GM12878 (cell line): ENCODE measurements at regions of chr2 and their contacts with region 1.

Region 1: GRCh38 chr2:165563468-165564225 is 94.1 kb downstream of the CSRNP3 start:
- DNase-seq: no peak
- ATAC-seq: peak; percentile 81
- H3K4me3 ChIP-seq: no peak overlapping the region
- H3K27ac ChIP-seq: no peak overlapping the region
- H3K4me1 ChIP-seq: no peaks in the 10 kb centered on the region
- H3K27me3 ChIP-seq: no peaks in the 10 kb centered on the region
- CTCF ChIP-seq: peak; percentile 11 to 47 (median 43); a peak in 3 of 6 replicates
- EP300 ChIP-seq: no peak
- POLR2A ChIP-seq: no peak
- RAD21 ChIP-seq: no peak

Region 2: DNA sequence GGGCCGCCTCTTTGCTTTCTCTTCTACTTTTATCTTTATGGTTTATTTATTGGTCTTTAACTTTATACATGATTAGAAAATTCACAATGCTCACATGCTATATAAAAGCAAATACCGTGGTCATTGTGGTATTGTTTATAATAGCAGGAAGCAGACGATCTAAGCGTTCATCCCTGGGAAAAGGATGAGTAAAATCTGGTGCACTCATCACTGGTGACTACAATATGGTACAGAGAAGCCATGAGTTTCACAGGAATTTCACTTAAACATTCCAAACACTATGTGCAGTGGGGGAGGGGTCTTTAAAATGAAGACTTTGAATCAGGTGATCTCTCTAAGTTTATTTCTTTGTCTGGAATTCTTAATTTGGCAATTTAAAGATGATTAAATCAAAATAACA is 457.7 kb before region 1 on chr2:
- CTCF ChIA-PET with region 1: no interaction called
- POLR2A ChIA-PET with region 1: no interaction called
- RAD21 ChIA-PET with region 1: no interaction called
- SMC1A ChIA-PET with region 1: no interaction called
- in situ Hi-C with region 1: no loop called
- intact Hi-C with region 1: no loop called
- DNase-seq: no peak
- ATAC-seq: no peak
- H3K4me3 ChIP-seq: no peak overlapping the region
- H3K27ac ChIP-seq: no peak overlapping the region
- H3K4me1 ChIP-seq: no peaks in the 10 kb centered on the region
- H3K27me3 ChIP-seq: no peaks in the 10 kb centered on the region
- CTCF ChIP-seq: no peak
- EP300 ChIP-seq: no peak
- POLR2A ChIP-seq: no peak
- RAD21 ChIP-seq: no peak

Region 3: GRCh38 chr2:165256618-165257017 is 307.0 kb before region 1 on chr2:
- CTCF ChIA-PET with region 1: no interaction called
- POLR2A ChIA-PET with region 1: no interaction called
- RAD21 ChIA-PET with region 1: no interaction called
- SMC1A ChIA-PET with region 1: no interaction called
- in situ Hi-C with region 1: no loop called
- intact Hi-C with region 1: no loop called
- DNase-seq: no peak
- ATAC-seq: no peak
- H3K4me3 ChIP-seq: no peak overlapping the region
- H3K27ac ChIP-seq: no peak overlapping the region
- H3K4me1 ChIP-seq: no peaks in the 10 kb centered on the region
- H3K27me3 ChIP-seq: no peaks in the 10 kb centered on the region
- CTCF ChIP-seq: no peak
- EP300 ChIP-seq: no peak
- POLR2A ChIP-seq: no peak
- RAD21 ChIP-seq: no peak

Region 4: GRCh38 chr2:165391791-165392190 is 171.9 kb before region 1 on chr2:
- CTCF ChIA-PET with region 1: no interaction called
- POLR2A ChIA-PET with region 1: no interaction called
- RAD21 ChIA-PET with region 1: no interaction called
- SMC1A ChIA-PET with region 1: no interaction called
- in situ Hi-C with region 1: no loop called
- intact Hi-C with region 1: no loop called
- DNase-seq: no peak
- ATAC-seq: no peak
- H3K4me3 ChIP-seq: no peak overlapping the region
- H3K27ac ChIP-seq: no peak overlapping the region
- H3K4me1 ChIP-seq: no peaks in the 10 kb centered on the region
- H3K27me3 ChIP-seq: no peaks in the 10 kb centered on the region
- CTCF ChIP-seq: no peak
- EP300 ChIP-seq: no peak
- POLR2A ChIP-seq: no peak
- RAD21 ChIP-seq: no peak

Region 5: GRCh38 chr2:165440367-165440766 is 123.3 kb before region 1 on chr2:
- CTCF ChIA-PET with region 1: interaction called, 10 read pairs
- POLR2A ChIA-PET with region 1: no interaction called
- RAD21 ChIA-PET with region 1: interaction called, 4 read pairs
- SMC1A ChIA-PET with region 1: interaction called, 6 read pairs
- in situ Hi-C with region 1: no loop called
- intact Hi-C with region 1: no loop called
- DNase-seq: no peak
- ATAC-seq: no peak
- H3K4me3 ChIP-seq: no peak overlapping the region
- H3K27ac ChIP-seq: no peak overlapping the region
- H3K4me1 ChIP-seq: no peaks in the 10 kb centered on the region
- H3K27me3 ChIP-seq: no peaks in the 10 kb centered on the region
- CTCF ChIP-seq: no peak
- EP300 ChIP-seq: no peak
- POLR2A ChIP-seq: no peak
- RAD21 ChIP-seq: no peak

Region 6: DNA sequence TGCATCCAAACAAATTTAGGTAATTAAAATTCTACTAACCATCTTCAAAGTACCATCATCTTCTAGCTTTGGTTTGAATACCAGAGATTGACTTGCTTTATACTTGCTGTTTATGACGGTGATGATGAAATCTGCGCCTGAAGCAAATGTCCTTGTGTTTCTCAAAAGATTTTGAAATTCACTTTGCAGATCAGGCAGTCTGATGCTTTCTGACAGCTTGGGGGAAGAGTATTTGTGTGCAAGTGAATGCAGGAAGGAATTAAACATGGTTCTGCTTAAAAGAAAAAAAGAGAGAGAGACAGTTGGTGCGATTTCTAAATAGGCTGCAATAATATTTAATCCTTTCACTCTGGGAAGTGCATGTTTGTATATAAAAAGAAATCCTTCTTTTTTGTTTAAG is 64.5 kb before region 1 on chr2:
- CTCF ChIA-PET with region 1: interaction called, 9 read pairs
- POLR2A ChIA-PET with region 1: no interaction called
- RAD21 ChIA-PET with region 1: interaction called, 8 read pairs
- SMC1A ChIA-PET with region 1: interaction called, 19 read pairs
- in situ Hi-C with region 1: no loop called
- intact Hi-C with region 1: no loop called
- DNase-seq: no peak
- ATAC-seq: no peak
- H3K4me3 ChIP-seq: no peak overlapping the region
- H3K27ac ChIP-seq: no peak overlapping the region
- H3K4me1 ChIP-seq: no peaks in the 10 kb centered on the region
- H3K27me3 ChIP-seq: no peaks in the 10 kb centered on the region
- CTCF ChIP-seq: no peak
- EP300 ChIP-seq: no peak
- POLR2A ChIP-seq: no peak
- RAD21 ChIP-seq: no peak

Region 7: GRCh38 chr2:165587335-165587938 is 23.8 kb after region 1 on chr2:
- CTCF ChIA-PET with region 1: interaction called, 14 read pairs
- POLR2A ChIA-PET with region 1: no interaction called
- RAD21 ChIA-PET with region 1: no interaction called
- SMC1A ChIA-PET with region 1: interaction called, 12 read pairs
- in situ Hi-C with region 1: no loop called
- intact Hi-C with region 1: no loop called
- DNase-seq: peak; percentile 32
- ATAC-seq: peak; percentile 90
- H3K4me3 ChIP-seq: 0 out of 2 replicates have a peak overlapping the region, but pooled peaks have one; percentile 19
- H3K27ac ChIP-seq: no peak overlapping the region; the same call in 1 of the 2 replicates
- H3K4me1 ChIP-seq: peaks cover 5% of the 10 kb centered on the region; the same call in 1 of the 2 replicates
- H3K27me3 ChIP-seq: no peaks in the 10 kb centered on the region
- CTCF ChIP-seq: no peak
- EP300 ChIP-seq: no peak
- POLR2A ChIP-seq: no peak
- RAD21 ChIP-seq: no peak

Region 8: DNA sequence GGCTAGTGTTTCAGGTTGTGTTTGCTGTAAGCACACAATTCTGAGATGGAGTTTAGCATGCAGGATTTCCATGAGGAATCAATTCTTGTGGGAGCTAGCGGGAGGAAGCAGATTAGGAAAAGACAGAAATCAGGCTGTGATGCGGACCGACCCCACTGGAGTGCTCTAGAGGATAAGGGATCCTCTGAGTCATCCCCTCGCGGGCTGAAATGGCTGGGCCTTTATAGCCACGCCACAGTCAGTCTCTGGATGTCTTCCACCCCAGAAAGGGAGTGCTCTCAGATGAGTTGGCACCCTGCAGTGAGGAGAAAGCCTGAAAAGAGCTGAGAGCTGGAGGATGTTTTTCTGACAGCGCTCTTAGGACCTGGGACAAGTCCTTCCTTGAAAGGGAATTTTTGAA is 128.0 kb after region 1 on chr2:
- CTCF ChIA-PET with region 1: interaction called, 105 read pairs
- POLR2A ChIA-PET with region 1: interaction called, 3 read pairs
- RAD21 ChIA-PET with region 1: interaction called, 42 read pairs
- SMC1A ChIA-PET with region 1: interaction called, 100 read pairs
- in situ Hi-C with region 1: no loop called
- intact Hi-C with region 1: no loop called
- DNase-seq: no peak
- ATAC-seq: no peak
- H3K4me3 ChIP-seq: no peak overlapping the region
- H3K27ac ChIP-seq: no peak overlapping the region
- H3K4me1 ChIP-seq: no peaks in the 10 kb centered on the region
- H3K27me3 ChIP-seq: no peaks in the 10 kb centered on the region
- CTCF ChIP-seq: no peak
- EP300 ChIP-seq: no peak
- POLR2A ChIP-seq: no peak
- RAD21 ChIP-seq: no peak

Region 9: GRCh38 chr2:165874445-165875039 is 310.9 kb after region 1 on chr2:
- CTCF ChIA-PET with region 1: interaction called, 33 read pairs
- POLR2A ChIA-PET with region 1: no interaction called
- RAD21 ChIA-PET with region 1: interaction called, 22 read pairs
- SMC1A ChIA-PET with region 1: interaction called, 15 read pairs
- in situ Hi-C with region 1: no loop called
- intact Hi-C with region 1: loop called (anchors 10 kb)
- DNase-seq: peak; percentile 36
- ATAC-seq: peak; percentile 86
- H3K4me3 ChIP-seq: no peak overlapping the region
- H3K27ac ChIP-seq: peak overlapping the region; percentile 12; the same call in 1 of the 2 replicates
- H3K4me1 ChIP-seq: peaks cover 7% of the 10 kb centered on the region; the same call in 1 of the 2 replicates
- H3K27me3 ChIP-seq: no peaks in the 10 kb centered on the region
- CTCF ChIP-seq: peak; percentile 60 to 81 (median 66)
- EP300 ChIP-seq: no peak
- POLR2A ChIP-seq: no peak
- RAD21 ChIP-seq: peak; percentile 91